Activated B cell treated with CpG ODN at 0.5 μM for 24 hours (primary cell): ENCODE measurements at regions of chr5 and their contacts with region 1.

Region 1: GRCh38 chr5:15013654-15014463 is 142.3 kb upstream of the ANKH start:
- DNase-seq: no peak
- ATAC-seq: peak; percentile 40
- H3K4me3 Mint-ChIP-seq: no peak overlapping the region
- H3K27ac Mint-ChIP-seq: no peak overlapping the region
- H3K4me1 Mint-ChIP-seq: no peaks in the 10 kb centered on the region
- H3K27me3 Mint-ChIP-seq: peaks cover 7% of the 10 kb centered on the region
- CTCF ChIP-seq: peak; percentile 60

Region 2: DNA sequence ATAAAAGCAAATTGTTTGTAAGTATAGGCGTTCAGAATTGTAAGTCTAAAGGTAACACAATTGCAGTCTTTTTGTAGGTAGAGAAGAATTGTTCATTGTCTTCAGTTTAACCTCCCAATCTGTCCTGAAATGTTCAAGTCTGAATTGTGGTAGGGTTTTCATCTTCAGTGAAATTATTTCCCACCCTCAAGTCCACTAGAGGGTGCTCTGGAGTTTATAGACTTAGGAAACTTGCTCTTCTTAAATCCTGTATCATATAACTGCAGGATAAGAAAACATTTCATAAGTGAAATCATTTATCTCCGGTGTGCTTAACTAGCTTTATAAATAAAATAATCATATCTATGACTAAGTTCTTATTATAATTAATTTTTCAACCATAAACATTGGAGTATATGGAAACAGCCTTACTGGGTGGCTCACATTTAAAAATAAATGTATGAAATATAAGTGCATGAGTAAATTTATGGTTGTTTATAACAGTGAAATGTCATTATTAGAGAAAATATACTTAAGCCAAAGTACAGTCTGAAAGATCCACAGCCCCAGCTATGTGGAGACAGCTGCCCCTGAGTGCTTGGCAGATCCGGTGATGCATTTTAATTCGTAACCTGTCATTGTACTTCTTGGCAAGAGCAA is 614.7 kb before region 1 on chr5:
- CTCF ChIA-PET with region 1: no interaction called
- POLR2A ChIA-PET with region 1: no interaction called
- intact Hi-C with region 1: loop called (anchors 10 kb)
- DNase-seq: no peak
- ATAC-seq: no peak
- H3K4me3 Mint-ChIP-seq: no peak overlapping the region
- H3K27ac Mint-ChIP-seq: no peak overlapping the region
- H3K4me1 Mint-ChIP-seq: no peaks in the 10 kb centered on the region
- H3K27me3 Mint-ChIP-seq: no peaks in the 10 kb centered on the region
- CTCF ChIP-seq: peak; percentile 23

Region 3: GRCh38 chr5:14534773-14535172 is 479.1 kb before region 1 on chr5:
- CTCF ChIA-PET with region 1: no interaction called
- POLR2A ChIA-PET with region 1: no interaction called
- intact Hi-C with region 1: no loop called
- DNase-seq: no peak
- ATAC-seq: no peak
- H3K4me3 Mint-ChIP-seq: no peak overlapping the region
- H3K27ac Mint-ChIP-seq: no peak overlapping the region
- H3K4me1 Mint-ChIP-seq: peaks cover 13% of the 10 kb centered on the region
- H3K27me3 Mint-ChIP-seq: peaks cover 3% of the 10 kb centered on the region
- CTCF ChIP-seq: no peak

Region 4: DNA sequence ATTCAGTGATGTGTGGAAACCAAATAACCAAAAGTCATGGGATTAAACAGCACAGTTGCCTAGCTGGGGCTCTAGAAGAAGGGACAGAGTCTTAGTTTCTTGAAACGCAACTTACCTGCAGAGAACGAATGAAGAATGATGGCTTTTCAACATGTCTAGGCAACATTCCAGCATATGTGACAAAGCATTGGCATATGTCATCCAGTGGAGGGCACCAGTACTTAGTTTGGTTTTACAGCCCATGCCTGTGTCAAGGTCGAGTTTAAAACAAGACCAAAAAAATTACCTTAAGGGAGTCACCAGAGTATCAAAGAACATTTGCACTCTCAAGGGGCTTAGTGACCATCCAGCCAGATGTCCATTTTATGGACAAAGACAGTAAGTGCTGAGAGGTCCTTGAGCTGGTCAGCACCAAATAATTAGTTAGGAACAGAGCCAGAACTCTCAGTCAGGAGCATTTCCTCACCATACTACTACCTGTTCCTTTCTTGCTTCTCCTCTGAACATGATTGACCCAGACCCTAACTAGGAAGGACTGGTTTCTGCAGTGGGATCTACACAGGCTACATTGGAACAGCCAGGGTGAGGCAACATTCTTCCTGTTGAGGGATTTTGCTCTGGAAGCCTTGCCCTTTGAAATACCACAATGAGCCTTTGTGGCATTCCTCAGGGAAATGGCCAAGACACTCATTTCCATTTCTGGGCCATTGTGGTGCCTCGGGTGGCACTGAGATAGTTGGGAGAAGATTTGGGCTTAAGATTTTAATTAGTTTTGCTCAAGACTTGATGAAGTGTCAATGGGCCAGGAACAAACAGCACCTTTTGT is 66.8 kb before region 1 on chr5:
- CTCF ChIA-PET with region 1: interaction called, 8 read pairs
- POLR2A ChIA-PET with region 1: no interaction called
- intact Hi-C with region 1: loop called (anchors 1 kb)
- DNase-seq: no peak
- ATAC-seq: peak; percentile 72
- H3K4me3 Mint-ChIP-seq: no peak overlapping the region
- H3K27ac Mint-ChIP-seq: no peak overlapping the region
- H3K4me1 Mint-ChIP-seq: no peaks in the 10 kb centered on the region
- H3K27me3 Mint-ChIP-seq: peaks cover 14% of the 10 kb centered on the region
- CTCF ChIP-seq: no peak

Region 5: DNA sequence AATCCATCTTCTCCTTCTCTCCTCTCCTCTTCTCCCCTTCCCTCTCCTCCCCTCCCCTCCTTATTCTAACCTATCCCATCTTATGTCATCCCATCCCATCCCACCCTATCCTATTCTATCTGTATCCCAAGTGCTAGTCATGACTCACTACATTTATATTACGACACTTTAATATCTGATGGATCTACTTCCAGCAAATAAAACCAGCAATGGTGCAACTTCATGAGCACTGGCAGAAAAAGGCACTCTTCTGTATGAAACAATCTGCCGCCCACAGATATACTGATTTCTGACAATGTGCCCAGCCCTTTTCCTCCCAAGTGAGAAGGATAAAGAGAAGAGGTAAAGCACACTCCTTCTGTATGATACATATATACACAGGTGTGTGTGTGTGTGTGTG is 55.7 kb before region 1 on chr5:
- CTCF ChIA-PET with region 1: interaction called, 9 read pairs
- POLR2A ChIA-PET with region 1: no interaction called
- intact Hi-C with region 1: loop called (anchors 1 kb)
- DNase-seq: no peak
- ATAC-seq: no peak
- H3K4me3 Mint-ChIP-seq: no peak overlapping the region
- H3K27ac Mint-ChIP-seq: no peak overlapping the region
- H3K4me1 Mint-ChIP-seq: peaks cover 4% of the 10 kb centered on the region
- H3K27me3 Mint-ChIP-seq: peaks cover 6% of the 10 kb centered on the region
- CTCF ChIP-seq: no peak

Region 6: DNA sequence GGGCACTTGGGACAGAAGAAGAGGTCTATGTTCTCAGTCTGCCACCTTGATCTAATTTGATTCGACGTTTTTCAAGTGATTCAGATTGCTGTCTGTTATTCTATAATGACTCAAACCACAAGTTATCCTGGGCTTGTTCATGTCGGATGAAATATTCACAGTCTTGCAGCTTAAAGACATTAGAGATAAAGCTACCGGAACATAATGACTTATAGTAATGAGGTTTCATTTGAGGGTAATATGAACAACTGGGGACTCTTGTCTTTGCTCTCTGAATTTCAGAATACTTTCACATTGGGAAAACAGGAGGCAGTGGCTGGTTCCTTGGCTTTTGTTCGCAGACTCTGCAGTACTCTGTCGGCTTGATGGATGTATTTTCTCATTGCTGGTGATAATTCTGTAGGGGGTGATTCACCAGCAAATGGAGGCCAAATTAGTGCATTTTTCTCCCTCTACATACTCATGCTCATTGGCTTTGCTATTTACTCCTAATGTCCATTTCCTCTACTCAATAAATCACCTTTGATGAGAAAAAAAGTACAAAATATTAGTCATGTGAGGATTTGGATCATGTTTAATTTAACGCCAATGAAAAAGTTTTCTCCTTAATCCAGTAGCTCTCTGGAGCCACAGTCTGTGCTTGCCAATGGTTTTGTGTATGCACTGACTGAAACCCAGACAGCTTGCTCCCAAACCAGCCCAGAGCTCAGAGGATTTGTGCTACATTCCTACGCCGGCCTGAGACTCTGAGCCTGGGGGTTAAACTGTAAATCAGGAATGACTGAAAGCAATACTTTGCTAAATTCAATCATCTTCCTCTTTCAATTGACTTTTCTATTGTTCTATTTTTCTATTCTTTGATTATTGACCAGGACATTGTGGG is 12.4 kb after region 1 on chr5:
- CTCF ChIA-PET with region 1: no interaction called
- POLR2A ChIA-PET with region 1: no interaction called
- intact Hi-C with region 1: no loop called
- DNase-seq: no peak
- ATAC-seq: no peak
- H3K4me3 Mint-ChIP-seq: no peak overlapping the region
- H3K27ac Mint-ChIP-seq: no peak overlapping the region
- H3K4me1 Mint-ChIP-seq: no peaks in the 10 kb centered on the region
- H3K27me3 Mint-ChIP-seq: peaks cover 24% of the 10 kb centered on the region
- CTCF ChIP-seq: no peak

Region 7: GRCh38 chr5:15085671-15086070 is 71.8 kb after region 1 on chr5:
- CTCF ChIA-PET with region 1: no interaction called
- POLR2A ChIA-PET with region 1: no interaction called
- intact Hi-C with region 1: no loop called
- DNase-seq: no peak
- ATAC-seq: no peak
- H3K4me3 Mint-ChIP-seq: no peak overlapping the region
- H3K27ac Mint-ChIP-seq: no peak overlapping the region
- H3K4me1 Mint-ChIP-seq: no peaks in the 10 kb centered on the region
- H3K27me3 Mint-ChIP-seq: no peaks in the 10 kb centered on the region
- CTCF ChIP-seq: no peak